Ascending aorta (tissue), 2 donors: ENCODE measurements at regions of chr19 and their contacts with region 1.

Region 1: DNA sequence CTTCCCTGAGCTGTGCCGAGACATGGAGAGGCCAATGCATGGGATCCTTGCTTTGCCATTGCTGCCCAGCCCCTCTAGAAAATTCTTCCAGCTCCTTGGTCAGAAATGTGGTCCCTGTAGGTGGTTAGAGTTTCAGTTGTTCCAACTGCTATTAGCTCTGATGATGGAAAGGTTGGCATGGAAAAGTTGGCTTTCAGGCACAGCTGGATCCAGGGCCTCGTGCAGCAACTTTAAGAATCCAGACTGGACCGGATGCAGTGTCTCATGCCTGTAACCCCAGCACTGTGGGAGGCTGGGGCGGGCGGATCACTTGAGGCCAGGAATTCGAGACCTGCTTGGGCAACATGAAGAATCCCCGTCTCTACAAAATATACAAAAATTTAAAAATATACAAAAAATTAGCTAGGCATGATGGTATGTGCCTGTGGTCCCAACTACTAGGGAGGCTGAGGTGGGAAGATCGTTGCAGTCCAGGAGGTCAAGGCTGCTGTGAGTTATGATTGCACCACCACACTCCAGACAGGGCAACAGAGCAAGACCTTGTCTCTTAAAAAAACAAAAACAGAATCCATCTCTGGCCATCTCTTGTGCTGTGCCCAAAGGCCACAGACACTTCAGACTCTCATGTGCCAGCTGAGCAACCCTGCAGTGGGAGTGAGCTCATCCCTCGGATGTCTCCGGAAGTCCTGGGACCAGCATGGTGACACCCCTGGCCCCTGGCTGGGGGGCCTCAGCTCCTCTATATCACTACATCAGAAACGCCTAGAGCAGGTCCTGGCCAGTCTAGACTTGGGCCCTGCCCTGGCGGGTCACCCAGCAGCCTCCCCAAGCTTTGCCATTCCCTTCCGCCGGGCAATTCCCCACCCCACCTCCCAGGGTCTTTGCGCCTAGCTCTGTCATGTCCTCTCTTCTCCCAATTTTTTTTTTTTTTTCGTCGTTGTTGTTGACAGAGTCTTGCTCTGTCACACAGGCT is 16.8 kb downstream of the MEX3D start:
- DNase-seq: no peak
- H3K4me3 ChIP-seq: no peak overlapping the region
- H3K27ac ChIP-seq: no peak overlapping the region
- H3K4me1 ChIP-seq: no peaks in the 10 kb centered on the region
- H3K27me3 ChIP-seq: no peaks in the 10 kb centered on the region
- CTCF ChIP-seq: no peak

Region 2: GRCh38 chr19:1672038-1672768 is 120.8 kb after region 1 on chr19:
- intact Hi-C with region 1: loop called (anchors 2 kb)
- DNase-seq: no peak
- H3K4me3 ChIP-seq: peak overlapping the region in 1 of 2 donors; percentile 11
- H3K27ac ChIP-seq: no peak overlapping the region
- H3K4me1 ChIP-seq: peaks cover 5% of the 10 kb centered on the region in 2 donors
- H3K27me3 ChIP-seq: peaks cover 31% of the 10 kb centered on the region
- CTCF ChIP-seq: peak; percentile 44 to 82 (median 81)

Region 3: DNA sequence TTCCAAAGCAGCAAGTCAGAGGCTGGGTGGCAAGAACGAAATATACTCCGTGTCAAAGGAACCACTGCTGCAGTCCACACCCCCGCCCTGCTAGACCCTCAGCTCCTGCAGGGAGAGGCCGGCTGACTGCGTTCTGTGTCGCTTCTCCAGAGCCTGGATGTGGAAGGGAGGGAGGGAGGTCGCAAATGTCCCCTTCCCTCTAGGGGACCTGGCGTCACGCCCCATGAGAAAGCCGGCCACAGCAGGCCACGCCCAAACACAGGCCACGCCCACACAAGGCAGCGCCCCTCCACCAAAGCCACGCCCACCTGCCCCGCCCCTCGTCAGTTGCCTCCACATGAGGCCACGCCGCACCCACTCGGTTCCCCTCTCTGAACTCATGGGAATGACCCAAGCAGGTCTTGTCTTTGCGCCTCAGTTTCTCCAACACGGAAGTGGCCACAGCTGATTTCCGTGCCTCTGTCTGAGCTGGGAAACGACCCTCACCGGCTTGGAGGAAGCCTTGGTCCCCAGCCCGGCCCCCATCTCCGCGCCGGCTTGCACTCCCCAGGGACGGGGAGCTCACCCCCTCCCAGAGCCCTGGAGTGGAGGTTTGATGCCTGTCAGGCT is 139.4 kb after region 1 on chr19:
- intact Hi-C with region 1: no loop called
- DNase-seq: no peak
- H3K4me3 ChIP-seq: no peak overlapping the region
- H3K27ac ChIP-seq: no peak overlapping the region
- H3K4me1 ChIP-seq: no peaks in the 10 kb centered on the region
- H3K27me3 ChIP-seq: peaks cover 10% of the 10 kb centered on the region
- CTCF ChIP-seq: no peak

Region 4: DNA sequence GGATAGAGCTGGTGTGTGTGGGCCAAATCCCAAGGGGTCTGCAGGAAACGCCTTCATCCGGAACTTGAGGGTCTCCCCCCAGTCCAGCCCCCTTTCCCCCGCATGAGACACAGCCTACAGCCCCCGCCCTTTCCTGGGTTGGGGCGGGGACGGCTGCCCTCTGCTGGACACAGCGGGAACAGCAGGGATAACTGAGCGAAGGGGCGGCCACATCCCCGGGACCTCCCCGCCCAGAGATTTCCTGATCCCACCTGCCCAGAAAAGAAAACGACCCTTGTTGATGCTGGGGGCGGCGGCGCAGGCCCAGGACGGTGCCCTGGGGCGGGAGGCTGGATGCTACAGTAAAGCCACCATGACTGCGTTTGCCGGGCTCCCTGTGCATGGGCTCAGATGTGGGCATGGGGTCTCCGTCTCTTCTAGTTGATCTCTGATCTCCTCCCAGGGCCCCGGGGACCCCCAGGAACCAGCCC is 216.1 kb after region 1 on chr19:
- intact Hi-C with region 1: loop called (anchors 1 kb)
- DNase-seq: no peak
- H3K4me3 ChIP-seq: no peak overlapping the region
- H3K27ac ChIP-seq: no peak overlapping the region
- H3K4me1 ChIP-seq: no peaks in the 10 kb centered on the region
- H3K27me3 ChIP-seq: peaks cover 25% of the 10 kb centered on the region
- CTCF ChIP-seq: peak; percentile 87 to 95 (median 94)

Region 5: DNA sequence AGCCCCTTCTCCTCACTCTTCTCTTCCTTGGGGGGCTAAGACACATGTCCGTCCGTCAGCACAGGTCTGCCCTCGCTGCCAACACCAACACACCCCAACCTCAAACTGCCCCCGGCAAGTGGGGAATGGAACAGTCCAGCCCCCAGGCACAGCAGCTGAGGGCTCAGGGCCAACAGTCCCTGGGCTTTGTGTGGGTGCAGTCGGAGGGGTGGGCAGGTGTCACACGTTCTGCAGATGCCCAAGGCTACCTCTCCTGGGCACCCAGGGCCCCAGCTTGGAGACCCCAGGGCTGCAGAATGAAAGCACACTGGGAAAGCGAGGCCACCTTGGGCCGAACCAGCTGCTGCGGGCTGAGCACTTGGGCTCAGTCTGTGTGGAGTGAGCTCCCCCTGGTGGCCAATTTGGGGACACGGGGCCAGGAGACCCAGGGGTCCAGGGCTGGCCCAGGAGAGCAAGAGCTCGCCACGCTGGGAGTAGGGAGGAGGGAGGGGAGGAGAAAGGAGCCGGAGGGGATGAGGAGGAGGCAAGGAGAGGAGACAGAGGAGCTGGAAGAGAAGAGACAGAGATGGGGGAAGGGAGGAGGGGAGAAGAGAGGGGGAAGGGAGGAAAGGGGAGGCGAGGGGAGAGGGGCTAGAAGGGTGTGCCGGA is 274.7 kb after region 1 on chr19:
- intact Hi-C with region 1: loop called (anchors 5 kb)
- DNase-seq: peak in 1 of 2 donors; percentile 83
- H3K4me3 ChIP-seq: no peak overlapping the region
- H3K27ac ChIP-seq: no peak overlapping the region
- H3K4me1 ChIP-seq: no peaks in the 10 kb centered on the region
- H3K27me3 ChIP-seq: no peaks in the 10 kb centered on the region
- CTCF ChIP-seq: peak; percentile 88 to 96 (median 94)